ENCODE measurements at regions of chr11 and their contacts with region 1.

Region 1: DNA sequence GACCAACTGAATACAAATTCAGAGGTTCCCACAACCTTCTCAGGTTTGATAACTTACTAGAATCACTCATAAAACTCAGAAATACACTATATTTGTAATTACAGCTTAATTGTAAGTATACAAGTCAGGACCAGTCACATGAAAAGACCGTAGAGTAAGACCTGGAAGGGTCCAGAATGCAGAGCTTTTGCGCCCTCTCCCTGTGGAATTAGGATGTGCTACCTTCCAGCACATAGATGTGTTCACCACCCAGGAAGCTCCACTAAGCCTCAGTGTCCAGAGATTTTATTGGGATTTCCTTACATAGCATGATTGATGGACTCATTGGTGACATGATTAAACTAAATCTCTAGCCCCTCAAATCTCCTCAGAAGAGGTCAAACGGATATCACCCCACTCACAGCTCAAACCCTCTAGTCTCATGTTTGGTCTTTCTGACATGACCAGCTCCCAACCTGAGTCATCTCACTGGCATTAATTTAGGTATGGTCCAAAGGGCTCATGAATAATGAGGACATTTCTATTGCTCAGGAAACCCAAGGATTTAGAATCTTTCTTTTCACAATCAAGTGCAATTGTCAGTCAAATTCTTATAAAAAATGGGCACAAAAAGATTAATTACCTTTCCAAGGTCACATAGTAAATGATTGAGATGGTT is 77.2 kb upstream of the UBASH3B start:
- DNase-seq: no peak
- H3K4me3 ChIP-seq: no peak overlapping the region
- H3K27ac ChIP-seq: no peak overlapping the region
- H3K4me1 ChIP-seq: peaks cover 11% of the 10 kb centered on the region
- H3K27me3 ChIP-seq: no peaks in the 10 kb centered on the region
- CTCF ChIP-seq: no peak

Region 2: DNA sequence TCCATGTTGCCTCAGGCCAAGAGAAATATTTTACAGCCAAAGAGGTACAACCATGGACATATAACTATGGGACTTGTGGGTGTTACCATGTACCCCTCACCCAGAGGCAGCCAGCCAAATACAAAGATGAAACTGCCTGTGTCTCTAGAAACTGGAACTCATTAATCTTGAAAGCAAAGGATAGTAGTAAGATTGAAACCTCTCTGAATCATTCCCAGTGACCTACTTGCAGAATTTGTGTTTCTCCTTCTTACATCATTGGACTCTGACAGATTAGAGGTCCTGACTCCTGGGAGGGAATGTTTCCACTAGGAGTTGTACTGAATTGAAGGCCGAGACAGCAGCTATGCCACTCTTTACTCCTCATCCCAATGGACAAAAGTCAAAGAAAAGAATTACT is 180.1 kb before region 1 on chr11:
- CTCF ChIA-PET with region 1: interaction called, 10 read pairs
- POLR2A ChIA-PET with region 1: no interaction called
- intact Hi-C with region 1: no loop called
- DNase-seq: no peak
- H3K4me3 ChIP-seq: no peak overlapping the region
- H3K27ac ChIP-seq: no peak overlapping the region
- H3K4me1 ChIP-seq: no peaks in the 10 kb centered on the region
- H3K27me3 ChIP-seq: no peaks in the 10 kb centered on the region
- CTCF ChIP-seq: no peak

Region 3: DNA sequence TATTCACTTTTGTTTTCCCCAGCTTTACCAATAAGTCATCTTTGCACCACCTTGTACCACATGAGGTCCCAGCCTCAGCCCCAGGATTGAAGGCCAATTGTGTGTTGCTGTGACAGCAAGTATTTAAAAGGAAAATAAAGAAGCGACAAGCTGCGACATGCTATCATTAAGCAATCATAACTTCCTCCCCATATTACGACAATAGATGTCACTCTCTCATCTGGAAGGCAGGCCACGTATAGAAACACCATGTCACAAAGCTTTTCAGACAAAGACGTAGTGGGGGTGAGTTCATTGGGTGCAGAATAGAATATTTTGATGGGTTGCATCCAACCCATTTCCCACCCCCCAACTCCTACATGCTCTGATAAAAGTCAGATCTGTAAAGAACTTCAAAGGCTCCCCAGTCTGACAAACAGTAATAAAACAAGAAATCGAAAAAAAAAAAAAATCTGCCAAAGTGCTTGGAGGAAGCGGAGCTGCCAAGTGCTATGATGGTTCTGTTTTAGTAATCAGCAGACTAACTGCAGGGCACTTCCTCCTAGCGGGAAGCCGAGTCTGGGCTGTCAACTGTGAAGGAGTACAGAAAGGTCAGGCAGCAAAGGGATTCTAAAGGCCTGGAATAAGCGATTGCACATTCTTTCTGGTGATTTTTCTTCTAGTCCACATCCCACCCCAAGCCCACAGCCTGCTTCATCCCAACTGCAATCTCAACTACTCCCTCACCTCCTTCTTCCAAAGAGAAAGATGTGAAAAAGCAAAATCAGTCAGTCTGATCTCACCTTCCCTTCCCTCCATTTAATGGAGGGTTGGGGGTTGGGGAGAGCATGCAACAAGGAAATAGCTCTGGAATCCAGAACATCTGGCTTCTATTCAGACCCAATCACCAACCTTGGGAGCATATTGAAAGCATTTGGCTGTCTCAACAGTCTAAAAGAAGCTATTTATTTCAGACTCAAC is 54.2 kb before region 1 on chr11:
- CTCF ChIA-PET with region 1: interaction called, 12 read pairs
- POLR2A ChIA-PET with region 1: no interaction called
- intact Hi-C with region 1: no loop called
- DNase-seq: no peak
- H3K4me3 ChIP-seq: no peak overlapping the region
- H3K27ac ChIP-seq: no peak overlapping the region
- H3K4me1 ChIP-seq: no peaks in the 10 kb centered on the region
- H3K27me3 ChIP-seq: peaks cover 10% of the 10 kb centered on the region; the same call in 1 of the 2 replicates
- CTCF ChIP-seq: no peak

Region 4: GRCh38 chr11:122628810-122629555 is 50.7 kb after region 1 on chr11:
- CTCF ChIA-PET with region 1: interaction called, 3 read pairs
- POLR2A ChIA-PET with region 1: no interaction called
- intact Hi-C with region 1: loop called (anchors 2 kb)
- DNase-seq: peak; percentile 53 to 65
- H3K4me3 ChIP-seq: no peak overlapping the region
- H3K27ac ChIP-seq: no peak overlapping the region
- H3K4me1 ChIP-seq: peaks cover 36% of the 10 kb centered on the region
- H3K27me3 ChIP-seq: no peaks in the 10 kb centered on the region
- CTCF ChIP-seq: peak; percentile 86

Region 5: DNA sequence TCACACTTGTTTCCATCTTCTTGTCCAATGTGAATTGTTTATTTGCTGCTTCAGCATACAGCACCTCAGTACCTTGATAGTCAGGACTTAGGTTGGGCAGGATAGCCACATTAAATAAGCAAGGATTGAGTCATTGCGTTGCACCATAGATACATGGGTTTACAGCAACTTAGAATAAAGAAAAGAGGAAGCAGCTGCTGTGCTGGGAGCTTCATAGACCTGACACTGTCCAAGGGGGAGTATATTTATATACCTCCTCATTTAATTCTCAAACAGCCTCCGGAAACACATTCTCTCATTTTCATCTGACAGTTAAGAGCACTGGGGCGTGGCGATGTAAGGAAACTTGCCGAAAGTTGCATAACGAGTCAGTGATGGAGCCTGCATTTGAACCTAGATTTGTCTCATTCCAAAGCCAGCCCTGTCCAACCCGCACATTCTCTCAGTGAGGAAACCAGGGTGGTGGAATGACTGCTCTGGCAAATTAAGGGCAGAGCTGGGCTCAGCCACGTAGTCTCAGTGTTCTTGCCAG is 119.4 kb after region 1 on chr11:
- CTCF ChIA-PET with region 1: no interaction called
- POLR2A ChIA-PET with region 1: no interaction called
- intact Hi-C with region 1: no loop called
- DNase-seq: peak; percentile 49 to 93
- H3K4me3 ChIP-seq: no peak overlapping the region
- H3K27ac ChIP-seq: peak overlapping the region; percentile 55
- H3K4me1 ChIP-seq: peaks cover 24% of the 10 kb centered on the region
- H3K27me3 ChIP-seq: no peaks in the 10 kb centered on the region
- CTCF ChIP-seq: no peak

Region 6: DNA sequence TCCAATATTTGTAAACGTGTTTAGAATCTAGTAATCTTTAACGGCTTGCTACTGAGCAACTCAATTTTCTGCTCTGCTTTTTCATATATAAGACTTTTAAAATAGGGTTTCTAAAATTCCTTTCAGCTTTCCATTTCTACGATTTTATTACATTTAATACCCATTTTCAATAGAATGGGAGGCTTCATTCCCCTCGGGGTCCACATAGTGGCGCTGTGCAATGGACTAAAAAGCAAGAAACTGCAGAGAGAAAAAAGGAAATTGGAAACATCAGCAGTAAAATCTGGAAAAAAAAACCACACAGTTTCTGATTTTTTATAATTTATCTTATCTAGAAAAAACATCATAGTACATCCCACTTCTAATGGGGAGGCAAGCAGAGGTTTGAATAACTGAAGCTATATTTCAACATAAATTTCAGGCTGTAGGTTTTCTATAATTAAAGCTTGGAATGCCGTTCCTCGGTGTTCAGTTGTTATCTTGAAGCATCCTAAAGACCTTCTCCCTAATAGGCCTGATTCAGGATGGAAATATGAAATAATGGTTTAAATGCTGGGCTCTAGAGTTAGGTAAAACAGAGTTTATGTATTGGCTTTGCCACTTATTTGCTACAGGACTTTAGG is 285.5 kb after region 1 on chr11:
- CTCF ChIA-PET with region 1: no interaction called
- POLR2A ChIA-PET with region 1: interaction called, 17 read pairs
- intact Hi-C with region 1: no loop called
- DNase-seq: peak in 1 of 2 experiments; percentile 37
- H3K4me3 ChIP-seq: no peak overlapping the region
- H3K27ac ChIP-seq: 0 out of 2 replicates have a peak overlapping the region, but pooled peaks have one; percentile 5
- H3K4me1 ChIP-seq: peaks cover 35% of the 10 kb centered on the region
- H3K27me3 ChIP-seq: no peaks in the 10 kb centered on the region
- CTCF ChIP-seq: peak; percentile 93

Measured in PC-9 (cell line).